CD14-positive monocyte (primary cell): ENCODE measurements at regions of chr20 and their contacts with region 1.

Region 1: DNA sequence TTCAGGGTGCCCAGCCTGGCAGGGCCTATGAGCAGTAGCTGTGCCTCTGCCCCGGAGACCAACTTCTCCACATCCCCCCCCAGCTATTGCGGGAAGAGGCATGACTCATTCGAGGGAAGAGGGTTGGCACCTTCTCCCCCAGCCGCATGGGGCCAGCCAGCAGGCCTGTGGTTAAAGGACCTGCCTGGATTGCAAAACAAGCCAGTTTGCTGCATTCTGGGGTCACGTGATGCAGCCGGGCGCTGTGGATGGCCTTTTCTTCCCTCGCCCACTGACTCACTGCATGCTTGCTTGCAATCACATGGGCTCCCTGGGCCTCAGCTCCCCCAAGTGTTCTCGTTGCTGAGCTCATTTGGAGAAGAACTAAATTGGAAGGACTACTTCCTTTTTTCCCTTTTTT is 182.5 kb downstream of the MAFB start:
- DNase-seq: peak; percentile 100
- H3K4me3 ChIP-seq: no peak overlapping the region
- H3K4me3 Mint-ChIP-seq: no peak overlapping the region
- H3K27ac ChIP-seq: peak overlapping the region; percentile 82 to 88
- H3K27ac Mint-ChIP-seq: peak overlapping the region; percentile 91 to 98 (median 95)
- H3K4me1 ChIP-seq: peaks cover 57 to 83% of the 10 kb centered on the region in 2 donors
- H3K4me1 Mint-ChIP-seq: peaks cover 80% of the 10 kb centered on the region
- H3K27me3 ChIP-seq: no peaks in the 10 kb centered on the region
- H3K27me3 Mint-ChIP-seq: peaks cover 0 to 1% (median 0%) of the 10 kb centered on the region in 3 donors
- CTCF ChIP-seq: no peak

Region 2: GRCh38 chr20:40339661-40340449 is 166.7 kb before region 1 on chr20:
- intact Hi-C with region 1: loop called in 1 of 2 experiments (anchors 5 kb)
- DNase-seq: peak; percentile 97 to 100 (median 99)
- H3K4me3 ChIP-seq: no peak overlapping the region
- H3K4me3 Mint-ChIP-seq: peak overlapping the region in 1 of 2 donors; percentile 50
- H3K27ac ChIP-seq: peak overlapping the region; percentile 93 to 98
- H3K27ac Mint-ChIP-seq: peak overlapping the region; percentile 97 to 100 (median 98)
- H3K4me1 ChIP-seq: peaks cover 19 to 28% of the 10 kb centered on the region in 2 donors
- H3K4me1 Mint-ChIP-seq: peaks cover 30% of the 10 kb centered on the region
- H3K27me3 ChIP-seq: peaks cover 0 to 2% of the 10 kb centered on the region in 2 donors
- H3K27me3 Mint-ChIP-seq: peaks cover 5 to 11% (median 8%) of the 10 kb centered on the region in 3 donors
- CTCF ChIP-seq: no peak

Region 3: DNA sequence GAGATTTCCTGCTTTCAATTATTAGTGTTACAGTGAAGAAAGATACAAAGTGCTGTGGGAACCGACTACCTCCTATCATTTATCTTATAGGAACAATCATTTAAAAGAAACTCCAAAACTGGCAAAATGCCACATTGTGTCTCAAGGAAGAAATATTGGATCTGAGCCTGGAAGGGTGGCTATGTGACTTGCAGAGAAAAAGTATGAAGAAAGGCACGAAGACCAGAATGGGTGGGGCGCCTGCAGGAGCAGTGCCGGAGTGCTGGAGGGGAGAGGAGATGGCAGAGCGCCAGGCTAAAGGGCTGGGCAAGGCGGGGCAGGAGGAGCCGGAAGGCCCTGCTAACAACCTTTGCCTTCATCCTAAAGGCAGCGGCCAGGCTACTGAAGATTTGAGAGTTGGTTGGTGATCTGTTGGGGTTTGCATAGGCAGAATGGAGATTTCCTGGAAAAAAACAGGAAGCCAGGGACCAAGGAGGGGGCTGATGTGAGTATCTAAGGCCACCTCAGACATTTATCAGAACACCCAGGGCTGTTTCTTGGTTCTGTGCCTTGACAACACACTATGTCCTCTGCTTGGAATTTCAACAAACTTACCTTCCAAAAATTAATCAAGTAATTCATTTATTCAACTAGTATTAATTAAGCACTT is 56.9 kb after region 1 on chr20:
- intact Hi-C with region 1: loop called (anchors 5 to 10 kb)
- DNase-seq: no peak
- H3K4me3 ChIP-seq: no peak overlapping the region
- H3K4me3 Mint-ChIP-seq: no peak overlapping the region
- H3K27ac ChIP-seq: peak overlapping the region in 1 of 2 donors; percentile 85
- H3K27ac Mint-ChIP-seq: peak overlapping the region in 4 of 7 donors; percentile 51 to 86 (median 78)
- H3K4me1 ChIP-seq: peaks cover 34 to 42% of the 10 kb centered on the region in 2 donors
- H3K4me1 Mint-ChIP-seq: peaks cover 42% of the 10 kb centered on the region
- H3K27me3 ChIP-seq: no peaks in the 10 kb centered on the region
- H3K27me3 Mint-ChIP-seq: peaks cover 2 to 7% (median 4%) of the 10 kb centered on the region in 3 donors
- CTCF ChIP-seq: no peak

Region 4: GRCh38 chr20:41320976-41321375 is 814.4 kb after region 1 on chr20:
- intact Hi-C with region 1: no loop called
- DNase-seq: no peak
- H3K4me3 ChIP-seq: no peak overlapping the region
- H3K4me3 Mint-ChIP-seq: no peak overlapping the region
- H3K27ac ChIP-seq: no peak overlapping the region
- H3K27ac Mint-ChIP-seq: peak overlapping the region in 2 of 7 donors; percentile 80 to 83
- H3K4me1 ChIP-seq: peaks cover 11 to 26% of the 10 kb centered on the region in 2 donors
- H3K4me1 Mint-ChIP-seq: peaks cover 25% of the 10 kb centered on the region
- H3K27me3 ChIP-seq: peaks cover 0 to 2% of the 10 kb centered on the region in 2 donors
- H3K27me3 Mint-ChIP-seq: peaks cover 6 to 18% (median 13%) of the 10 kb centered on the region in 3 donors
- CTCF ChIP-seq: no peak

Region 5: GRCh38 chr20:41534842-41535241 is 1028.3 kb after region 1 on chr20:
- intact Hi-C with region 1: no loop called
- DNase-seq: no peak
- H3K4me3 ChIP-seq: no peak overlapping the region
- H3K4me3 Mint-ChIP-seq: no peak overlapping the region
- H3K27ac ChIP-seq: no peak overlapping the region
- H3K27ac Mint-ChIP-seq: no peak overlapping the region
- H3K4me1 ChIP-seq: no peaks in the 10 kb centered on the region
- H3K4me1 Mint-ChIP-seq: no peaks in the 10 kb centered on the region
- H3K27me3 ChIP-seq: no peaks in the 10 kb centered on the region
- H3K27me3 Mint-ChIP-seq: no peaks in the 10 kb centered on the region
- CTCF ChIP-seq: no peak